ENCODE measurements at regions of chr2 and their contacts with region 1.

Region 1: GRCh38 chr2:70871398-70872211 is 36.0 kb upstream of the CD207 start:
- DNase-seq: peak; percentile 86
- ATAC-seq: peak; percentile 96
- H3K4me3 Mint-ChIP-seq: no peak overlapping the region
- H3K27ac Mint-ChIP-seq: no peak overlapping the region
- H3K4me1 Mint-ChIP-seq: peaks cover 2% of the 10 kb centered on the region
- H3K27me3 Mint-ChIP-seq: peaks cover 48% of the 10 kb centered on the region

Region 2: DNA sequence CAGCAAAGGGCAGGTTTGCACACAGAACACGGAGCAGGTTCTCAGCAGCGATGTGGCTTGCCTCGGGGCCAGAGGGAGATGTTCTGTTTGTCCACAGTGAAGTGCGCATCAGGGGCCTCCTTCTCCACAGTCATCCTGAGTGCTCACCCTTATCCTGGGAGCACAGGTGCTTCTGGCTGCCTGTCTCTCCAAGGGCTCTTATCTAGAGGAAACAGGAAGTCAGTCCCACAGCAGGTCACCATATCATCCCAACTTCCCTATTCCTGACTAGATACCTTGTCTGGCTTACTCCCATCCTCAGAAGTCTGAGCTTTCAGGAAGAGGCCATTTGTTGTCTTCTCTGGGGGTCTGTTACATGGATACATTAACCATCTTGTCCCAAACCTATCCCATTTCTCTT is 36.0 kb before region 1 on chr2 and contains the start of gene CD207:
- CTCF ChIA-PET with region 1: no interaction called
- DNase-seq: no peak
- ATAC-seq: no peak
- H3K4me3 Mint-ChIP-seq: no peak within 1 kb of the TSS
- H3K27ac Mint-ChIP-seq: no peak within 1 kb of the TSS
- H3K4me1 Mint-ChIP-seq: no peaks in the 10 kb centered on the region
- H3K27me3 Mint-ChIP-seq: peaks cover 4% of the 10 kb centered on the region
- total RNA-seq, gene CD207: not detected

Region 3: GRCh38 chr2:70851704-70852103 is 19.9 kb before region 1 on chr2:
- CTCF ChIA-PET with region 1: interaction called, 12 read pairs
- DNase-seq: peak; percentile 68
- ATAC-seq: peak; percentile 96
- H3K4me3 Mint-ChIP-seq: peak overlapping the region; percentile 23
- H3K27ac Mint-ChIP-seq: peak overlapping the region; percentile 84
- H3K4me1 Mint-ChIP-seq: peaks cover 33% of the 10 kb centered on the region
- H3K27me3 Mint-ChIP-seq: peaks cover 12% of the 10 kb centered on the region

Region 4: DNA sequence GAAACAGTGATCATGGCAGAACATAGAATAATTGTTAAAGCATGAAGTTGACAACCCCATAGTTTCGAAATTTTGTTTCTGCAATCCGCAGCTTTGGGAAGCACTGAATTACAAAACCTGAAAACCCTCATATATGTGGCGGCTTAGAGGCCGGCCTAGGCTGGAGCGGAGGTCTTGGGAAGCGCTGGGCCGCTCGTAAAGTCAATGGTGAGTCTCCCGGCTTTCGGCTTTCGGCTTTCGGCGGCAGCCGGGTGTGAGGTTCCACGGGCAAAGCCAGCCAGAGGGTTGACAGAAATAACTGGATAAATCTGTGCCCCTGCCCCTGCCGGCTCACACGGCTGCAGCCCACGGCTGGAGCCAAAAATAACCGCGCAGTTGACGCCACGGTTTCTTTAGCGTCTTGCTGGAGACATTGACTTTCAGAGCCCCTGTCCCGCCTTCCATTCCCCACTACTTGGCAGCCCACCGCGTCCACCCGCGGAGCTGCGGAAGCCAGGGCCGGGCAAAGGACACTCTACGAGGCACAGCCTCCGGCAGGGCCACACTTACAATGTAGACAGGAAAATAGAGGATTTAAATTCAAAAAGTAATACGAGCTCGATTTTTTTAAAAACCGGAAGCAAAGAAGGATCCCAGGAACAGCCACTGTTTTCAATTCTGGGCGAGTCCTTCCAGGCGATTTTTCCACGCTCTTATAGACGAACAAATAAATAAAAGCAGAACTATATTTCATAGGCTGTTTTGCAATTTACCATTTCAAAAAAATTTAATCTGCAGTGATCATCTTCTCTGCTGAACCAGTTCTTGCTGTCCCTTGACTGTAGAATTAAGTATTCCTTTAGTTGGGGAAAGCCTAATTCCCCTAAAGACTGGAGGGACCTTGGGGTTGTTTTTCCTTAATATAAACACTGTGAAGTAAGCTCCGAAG is 35.8 kb after region 1 on chr2:
- CTCF ChIA-PET with region 1: interaction called, 14 read pairs
- DNase-seq: no peak
- ATAC-seq: no peak
- H3K4me3 Mint-ChIP-seq: no peak overlapping the region
- H3K27ac Mint-ChIP-seq: no peak overlapping the region
- H3K4me1 Mint-ChIP-seq: peaks cover 8% of the 10 kb centered on the region
- H3K27me3 Mint-ChIP-seq: peaks cover 83% of the 10 kb centered on the region

Region 5: DNA sequence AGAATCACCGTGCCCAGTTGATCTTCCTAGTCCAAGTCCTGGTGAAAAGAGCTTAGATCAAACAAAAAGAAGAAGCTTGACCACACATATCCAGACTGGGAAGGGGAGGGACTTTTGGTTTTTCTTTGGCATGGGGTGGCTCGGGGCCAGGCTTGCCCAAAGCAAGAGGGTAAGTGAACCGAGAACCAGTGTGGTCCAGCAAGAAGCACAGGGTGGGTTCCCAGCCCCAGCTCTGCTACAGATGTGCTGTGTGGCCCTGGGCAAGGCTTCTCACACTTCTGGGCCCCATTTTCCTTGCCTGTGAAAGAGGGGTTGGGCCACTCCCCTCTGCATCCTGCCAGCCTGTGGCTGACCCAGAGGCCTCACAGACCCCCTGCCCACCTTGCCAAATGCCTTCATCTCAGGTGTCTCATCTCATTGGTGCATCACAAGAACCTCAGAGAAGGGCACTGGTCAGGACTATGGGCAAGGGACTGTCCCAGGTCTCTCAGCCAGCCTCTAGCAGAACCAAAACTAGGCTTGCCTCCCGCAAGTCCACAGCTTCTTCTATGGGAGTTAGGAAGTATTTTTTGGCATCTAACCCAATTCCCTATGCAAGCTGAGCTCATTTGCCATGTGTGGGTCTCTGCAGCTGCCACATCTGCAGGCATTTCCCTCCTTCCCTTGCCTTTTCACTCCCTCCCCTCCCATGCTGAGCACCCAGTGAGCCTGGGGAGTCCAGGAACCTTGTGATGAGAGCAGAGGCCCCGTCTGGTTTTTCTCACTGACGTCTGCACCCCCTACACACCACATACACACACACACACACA is 71.0 kb after region 1 on chr2:
- CTCF ChIA-PET with region 1: interaction called, 84 read pairs
- DNase-seq: no peak
- ATAC-seq: no peak
- H3K4me3 Mint-ChIP-seq: no peak overlapping the region
- H3K27ac Mint-ChIP-seq: no peak overlapping the region
- H3K4me1 Mint-ChIP-seq: peaks cover 8% of the 10 kb centered on the region
- H3K27me3 Mint-ChIP-seq: peaks cover 34% of the 10 kb centered on the region

Region 6: GRCh38 chr2:70954886-70955285 is 83.3 kb after region 1 on chr2:
- CTCF ChIA-PET with region 1: interaction called, 21 read pairs
- DNase-seq: peak; percentile 35
- ATAC-seq: no peak
- H3K4me3 Mint-ChIP-seq: no peak overlapping the region
- H3K27ac Mint-ChIP-seq: no peak overlapping the region
- H3K4me1 Mint-ChIP-seq: peaks cover 26% of the 10 kb centered on the region
- H3K27me3 Mint-ChIP-seq: peaks cover 31% of the 10 kb centered on the region

Measured in activated CD8-positive, alpha-beta memory T cell treated with anti-CD3 and anti-CD28 coated beads, Interleukin-2, amount 10 ng/mL, durations not matched to agents 7 days and 5 days (primary cell).